Activated B cell treated with CpG ODN at 0.5 μM for 24 hours (primary cell): ENCODE measurements at regions of chr2 and their contacts with region 1.

Region 1: DNA sequence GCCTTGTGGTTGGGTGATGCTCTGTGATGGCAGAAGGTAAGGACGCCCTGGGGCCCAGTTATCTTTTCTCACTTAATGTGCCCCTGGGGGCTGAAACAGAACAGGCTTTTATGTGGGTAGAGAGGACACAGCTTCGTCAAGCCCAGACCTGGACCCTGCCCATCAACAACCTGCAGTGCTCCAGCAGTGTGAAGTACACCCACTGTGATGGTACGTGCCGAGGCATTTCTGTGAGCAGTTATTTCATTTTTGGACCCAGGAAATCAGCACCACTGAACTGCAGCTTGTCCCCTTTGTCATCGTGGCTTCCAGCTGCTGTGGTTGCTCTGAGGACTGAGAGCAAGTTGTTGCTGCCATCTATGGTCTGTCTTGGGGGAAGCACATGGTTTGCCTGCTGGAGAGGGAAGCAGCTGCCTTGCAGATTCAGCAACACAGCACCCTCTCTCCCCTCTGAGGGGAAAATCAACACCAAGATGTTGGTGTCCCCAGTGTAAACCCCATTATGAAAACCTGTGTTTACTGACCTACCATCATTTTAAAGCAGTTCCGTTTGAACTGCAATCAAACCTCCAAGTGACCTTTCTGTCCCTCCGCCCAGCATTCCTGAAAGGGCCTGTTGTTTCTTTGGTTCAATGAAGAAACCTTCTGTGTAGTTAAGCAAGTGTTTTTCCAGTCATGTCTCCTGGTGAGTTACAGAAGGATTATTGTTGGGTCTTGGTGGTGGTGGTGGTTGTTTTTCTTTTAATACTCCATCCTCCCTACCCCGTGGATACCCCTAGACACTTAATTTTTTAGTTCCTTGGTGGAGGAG is 158.2 kb downstream of the MGAT5 start:
- DNase-seq: peak; percentile 55
- ATAC-seq: peak; percentile 97
- H3K4me3 Mint-ChIP-seq: peak overlapping the region; percentile 46
- H3K27ac Mint-ChIP-seq: peak overlapping the region; percentile 86
- H3K4me1 Mint-ChIP-seq: peaks cover 46% of the 10 kb centered on the region
- H3K27me3 Mint-ChIP-seq: no peaks in the 10 kb centered on the region
- CTCF ChIP-seq: no peak

Region 2: DNA sequence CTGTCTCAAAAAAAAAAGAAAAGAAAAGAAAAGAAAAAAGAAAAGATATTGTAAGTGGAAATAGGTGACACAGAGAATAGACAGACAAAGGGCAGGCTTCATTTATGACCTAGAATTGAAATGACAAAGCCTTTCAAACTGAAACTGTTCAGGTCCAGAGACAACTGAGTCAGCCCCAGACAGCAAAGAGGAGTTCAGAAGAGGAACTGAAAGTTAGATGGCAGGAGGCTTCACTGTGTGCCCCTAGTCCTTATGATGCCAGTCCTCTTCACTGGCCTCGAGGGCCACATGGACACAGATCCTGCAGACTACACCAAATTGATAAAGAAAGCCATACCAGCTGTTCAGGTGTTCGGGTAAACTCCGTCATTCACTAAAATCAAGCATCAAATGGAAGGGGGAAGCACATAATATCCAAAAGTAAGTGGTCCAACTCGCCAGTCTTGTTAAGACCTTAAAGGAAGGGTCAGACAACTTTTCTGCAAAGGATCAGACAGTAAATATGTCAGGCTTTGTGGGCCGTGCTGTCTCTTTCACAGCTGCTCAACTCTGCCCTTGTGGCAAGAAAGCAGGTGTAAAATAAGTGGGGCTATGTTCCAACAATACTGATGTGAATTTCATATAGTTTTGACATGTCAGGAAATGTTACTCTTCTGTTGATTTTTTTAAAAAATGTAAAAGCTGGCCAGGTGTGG is 390.1 kb before region 1 on chr2:
- CTCF ChIA-PET with region 1: interaction called, 4 read pairs
- POLR2A ChIA-PET with region 1: no interaction called
- intact Hi-C with region 1: loop called (anchors 5 kb)
- DNase-seq: no peak
- ATAC-seq: peak; percentile 98
- H3K4me3 Mint-ChIP-seq: peak overlapping the region; percentile 35
- H3K27ac Mint-ChIP-seq: peak overlapping the region; percentile 74
- H3K4me1 Mint-ChIP-seq: peaks cover 35% of the 10 kb centered on the region
- H3K27me3 Mint-ChIP-seq: no peaks in the 10 kb centered on the region
- CTCF ChIP-seq: no peak

Region 3: DNA sequence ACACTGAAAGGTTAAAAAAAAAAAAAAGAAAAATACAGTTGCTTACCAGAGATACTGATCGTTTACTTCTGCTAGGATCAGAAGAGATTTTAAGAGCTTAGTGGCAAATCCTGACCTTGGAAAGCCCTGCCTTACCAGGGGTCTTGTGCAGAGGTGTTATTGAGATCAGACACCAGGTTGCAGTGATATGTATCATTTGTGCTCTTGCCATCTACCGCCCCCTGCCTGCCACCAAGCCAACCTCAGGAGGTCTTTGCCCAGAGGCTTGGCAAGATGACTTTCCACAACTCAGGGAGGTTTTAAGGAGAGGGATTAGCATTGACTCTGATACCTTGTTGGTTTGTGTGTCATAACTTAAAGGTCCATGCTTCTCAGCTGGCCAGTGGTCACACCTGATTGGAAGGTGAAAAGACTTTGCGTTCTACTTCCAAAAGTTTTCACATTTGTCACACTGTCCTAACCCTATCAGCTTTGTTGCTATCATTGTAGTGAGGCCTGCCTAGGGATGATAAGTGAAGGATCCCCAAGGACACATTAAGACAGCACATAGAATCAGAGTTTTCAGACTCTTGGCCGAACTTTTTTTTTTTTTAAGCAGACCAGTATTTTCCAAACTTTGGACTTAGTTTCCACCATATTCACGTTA is 204.3 kb before region 1 on chr2:
- CTCF ChIA-PET with region 1: interaction called, 52 read pairs
- POLR2A ChIA-PET with region 1: no interaction called
- intact Hi-C with region 1: loop called (anchors 5 kb)
- DNase-seq: peak; percentile 42
- ATAC-seq: peak; percentile 84
- H3K4me3 Mint-ChIP-seq: no peak overlapping the region
- H3K27ac Mint-ChIP-seq: peak overlapping the region; percentile 46
- H3K4me1 Mint-ChIP-seq: peaks cover 9% of the 10 kb centered on the region
- H3K27me3 Mint-ChIP-seq: no peaks in the 10 kb centered on the region
- CTCF ChIP-seq: no peak

Region 4: GRCh38 chr2:134253804-134254203 is 158.2 kb before region 1 on chr2 and contains the start of gene MGAT5:
- CTCF ChIA-PET with region 1: interaction called, 14 read pairs
- POLR2A ChIA-PET with region 1: interaction called, 8 read pairs
- intact Hi-C with region 1: no loop called
- DNase-seq: no peak
- ATAC-seq: peak; percentile 43
- H3K4me3 Mint-ChIP-seq: peak within 1 kb of the TSS; percentile 74
- H3K27ac Mint-ChIP-seq: peak within 1 kb of the TSS; percentile 95
- H3K4me1 Mint-ChIP-seq: peaks cover 95% of the 10 kb centered on the region
- H3K27me3 Mint-ChIP-seq: no peaks in the 10 kb centered on the region
- CTCF ChIP-seq: no peak
- total RNA-seq, gene MGAT5: 66.7 and 69.0 TPM in 2 replicates

Region 5: GRCh38 chr2:134268265-134268664 is 143.8 kb before region 1 on chr2:
- CTCF ChIA-PET with region 1: interaction called, 14 read pairs
- POLR2A ChIA-PET with region 1: interaction called, 5 read pairs
- intact Hi-C with region 1: no loop called
- DNase-seq: no peak
- ATAC-seq: no peak
- H3K4me3 Mint-ChIP-seq: no peak overlapping the region
- H3K27ac Mint-ChIP-seq: peak overlapping the region; percentile 84
- H3K4me1 Mint-ChIP-seq: peaks cover 90% of the 10 kb centered on the region
- H3K27me3 Mint-ChIP-seq: no peaks in the 10 kb centered on the region
- CTCF ChIP-seq: no peak

Region 6: GRCh38 chr2:134336352-134336751 is 75.7 kb before region 1 on chr2:
- CTCF ChIA-PET with region 1: interaction called, 12 read pairs
- POLR2A ChIA-PET with region 1: no interaction called
- intact Hi-C with region 1: no loop called
- DNase-seq: no peak
- ATAC-seq: peak; percentile 82
- H3K4me3 Mint-ChIP-seq: peak overlapping the region; percentile 12
- H3K27ac Mint-ChIP-seq: peak overlapping the region; percentile 57
- H3K4me1 Mint-ChIP-seq: peaks cover 64% of the 10 kb centered on the region
- H3K27me3 Mint-ChIP-seq: no peaks in the 10 kb centered on the region
- CTCF ChIP-seq: no peak

Region 7: GRCh38 chr2:135072125-135072997 is 660.3 kb after region 1 on chr2:
- CTCF ChIA-PET with region 1: no interaction called
- POLR2A ChIA-PET with region 1: no interaction called
- intact Hi-C with region 1: no loop called
- DNase-seq: no peak
- ATAC-seq: no peak
- H3K4me3 Mint-ChIP-seq: no peak overlapping the region
- H3K27ac Mint-ChIP-seq: no peak overlapping the region
- H3K4me1 Mint-ChIP-seq: peaks cover 8% of the 10 kb centered on the region
- H3K27me3 Mint-ChIP-seq: no peaks in the 10 kb centered on the region
- CTCF ChIP-seq: no peak